ENCODE measurements at regions of chr1 and their contacts with region 1.

Region 1: DNA sequence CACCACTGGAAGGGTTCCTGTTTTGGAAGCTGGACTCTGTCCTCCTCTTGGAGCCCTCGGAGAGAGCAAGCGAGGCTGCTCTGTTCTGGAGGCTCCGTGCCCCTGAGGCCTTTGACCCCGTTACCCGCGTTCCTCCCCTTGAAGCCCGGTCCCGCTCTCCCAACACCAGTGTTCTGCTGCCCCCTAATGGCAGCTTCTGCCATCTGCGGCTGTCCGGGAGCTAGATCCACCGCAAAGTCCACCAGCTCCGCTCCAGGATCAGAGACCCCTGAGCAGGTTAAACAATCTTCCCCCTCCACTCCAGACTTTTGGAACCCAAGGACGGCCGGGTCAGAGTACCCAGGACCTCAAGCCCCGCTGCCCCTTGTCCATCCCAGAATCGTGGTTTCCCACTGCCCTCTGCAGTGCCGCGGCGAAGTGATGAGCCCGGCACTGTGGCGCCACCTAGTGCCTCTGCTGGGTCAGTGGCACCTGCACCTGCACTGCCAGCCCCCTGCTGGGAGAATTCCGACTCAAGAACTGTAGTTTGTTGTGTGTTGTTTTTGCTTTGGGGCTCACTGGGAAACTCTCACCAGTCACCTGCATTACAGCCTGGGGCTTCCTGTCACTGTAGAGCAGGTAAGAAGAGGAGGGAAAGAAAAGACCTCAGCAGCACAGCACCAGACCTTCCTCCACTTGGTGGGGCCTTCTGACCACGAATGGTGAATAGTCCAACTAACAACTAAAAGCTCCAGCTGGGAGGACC is 63.5 kb upstream of the NFASC start:
- DNase-seq: peak; percentile 89
- H3K4me3 ChIP-seq: peak overlapping the region; percentile 50 to 81
- H3K27ac ChIP-seq: no peak overlapping the region; a peak in 1 of 4 replicates
- H3K4me1 ChIP-seq: peaks cover 0 to 2% of the 10 kb centered on the region in 2 experiments; a peak in 1 of 4 replicates
- H3K27me3 ChIP-seq: 0 out of 2 replicates have a peak, but pooled peaks cover 2% of the 10 kb centered on the region
- CTCF ChIP-seq: peak; percentile 100
- EP300 ChIP-seq: no peak
- RAD21 ChIP-seq: peak; percentile 72

Region 2: DNA sequence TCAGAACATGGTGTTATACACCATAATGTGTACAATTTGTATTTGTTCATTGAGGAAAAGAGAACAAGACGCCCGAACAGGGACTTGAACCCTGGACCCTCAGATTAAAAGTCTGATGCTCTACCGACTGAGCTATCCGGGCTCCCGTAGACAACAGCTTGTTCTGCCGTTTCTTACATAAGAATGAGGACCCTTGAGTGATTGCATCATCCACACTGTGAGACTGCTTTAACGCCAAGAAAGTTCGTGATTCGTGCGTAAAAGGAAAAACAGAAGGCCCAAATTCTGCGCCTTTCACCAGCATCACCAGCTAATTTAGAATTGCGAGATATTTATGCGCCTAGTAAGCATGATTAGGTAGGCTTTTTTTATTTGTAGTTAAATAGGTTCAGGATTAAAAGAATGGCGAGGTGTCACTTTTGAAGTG is 300.1 kb before region 1 on chr1:
- CTCF ChIA-PET with region 1: interaction called, 31 read pairs
- POLR2A ChIA-PET with region 1: no interaction called
- DNase-seq: peak; percentile 43
- H3K4me3 ChIP-seq: peak overlapping the region; percentile 44 to 72
- H3K27ac ChIP-seq: peak overlapping the region; percentile 92 to 95
- H3K4me1 ChIP-seq: peaks cover 3 to 5% of the 10 kb centered on the region in 2 experiments; a peak in 2 of 4 replicates
- H3K27me3 ChIP-seq: no peaks in the 10 kb centered on the region
- CTCF ChIP-seq: no peak
- EP300 ChIP-seq: peak in 1 of 2 experiments; percentile 62; a peak in 1 of 4 replicates
- RAD21 ChIP-seq: no peak

Region 3: GRCh38 chr1:204565617-204566582 is 241.2 kb before region 1 on chr1:
- CTCF ChIA-PET with region 1: interaction called, 568 read pairs
- POLR2A ChIA-PET with region 1: interaction called, 6 read pairs
- DNase-seq: peak; percentile 89
- H3K4me3 ChIP-seq: no peak overlapping the region; a peak in 1 of 4 replicates
- H3K27ac ChIP-seq: no peak overlapping the region
- H3K4me1 ChIP-seq: no peaks in the 10 kb centered on the region; a peak in 1 of 4 replicates
- H3K27me3 ChIP-seq: no peaks in the 10 kb centered on the region
- CTCF ChIP-seq: peak; percentile 82
- EP300 ChIP-seq: no peak
- RAD21 ChIP-seq: peak; percentile 94

Region 4: DNA sequence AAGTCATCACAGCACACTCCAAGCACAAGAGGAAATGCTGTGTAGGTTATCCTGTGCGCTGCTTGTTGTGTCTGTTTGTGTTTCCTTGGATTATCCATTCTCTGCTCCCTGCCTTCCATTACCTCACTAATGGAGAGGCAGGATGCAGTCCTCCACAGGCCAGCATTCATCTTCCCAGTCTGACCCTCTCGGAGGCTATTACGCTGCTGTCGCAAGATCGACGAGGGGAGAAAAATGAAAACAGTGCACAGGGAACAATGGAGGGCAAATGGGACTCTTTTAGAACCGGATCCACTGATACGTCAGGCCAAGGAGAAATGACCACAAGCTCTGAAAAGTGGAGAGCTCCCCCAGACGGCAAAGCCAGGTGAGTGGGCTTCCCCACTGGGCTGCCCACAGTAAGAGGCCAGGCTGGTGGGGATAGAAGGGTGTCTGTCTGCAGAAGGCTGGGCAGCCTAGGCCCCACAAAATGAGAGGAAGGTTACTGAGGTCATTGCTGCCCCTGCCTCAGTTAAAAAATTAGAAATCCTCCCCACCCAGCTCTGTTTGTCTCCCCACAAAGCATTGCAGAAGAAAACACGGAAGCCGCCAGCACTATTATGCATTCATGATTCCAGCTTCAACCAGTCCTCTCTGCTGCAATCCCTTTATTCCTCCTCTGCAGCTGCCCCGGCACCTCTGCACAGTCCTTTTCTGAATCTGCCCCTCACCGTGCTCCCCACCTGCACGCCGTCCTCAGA is 143.3 kb before region 1 on chr1:
- CTCF ChIA-PET with region 1: interaction called, 12 read pairs
- POLR2A ChIA-PET with region 1: no interaction called
- DNase-seq: no peak
- H3K4me3 ChIP-seq: no peak overlapping the region
- H3K27ac ChIP-seq: no peak overlapping the region
- H3K4me1 ChIP-seq: peaks cover 0 to 5% of the 10 kb centered on the region in 2 experiments; a peak in 1 of 4 replicates
- H3K27me3 ChIP-seq: peaks cover 8% of the 10 kb centered on the region; the same call in 1 of the 2 replicates
- CTCF ChIP-seq: no peak
- EP300 ChIP-seq: no peak
- RAD21 ChIP-seq: no peak

Region 5: GRCh38 chr1:204769997-204770396 is 37.1 kb before region 1 on chr1:
- CTCF ChIA-PET with region 1: interaction called, 28 read pairs
- POLR2A ChIA-PET with region 1: no interaction called
- DNase-seq: no peak
- H3K4me3 ChIP-seq: no peak overlapping the region
- H3K27ac ChIP-seq: no peak overlapping the region
- H3K4me1 ChIP-seq: no peaks in the 10 kb centered on the region
- H3K27me3 ChIP-seq: peaks cover 23% of the 10 kb centered on the region; the same call in 1 of the 2 replicates
- CTCF ChIP-seq: no peak
- EP300 ChIP-seq: no peak
- RAD21 ChIP-seq: no peak

Region 6: GRCh38 chr1:204885288-204885711 is 78.2 kb after region 1 on chr1:
- CTCF ChIA-PET with region 1: interaction called, 46 read pairs
- POLR2A ChIA-PET with region 1: no interaction called
- DNase-seq: no peak
- H3K4me3 ChIP-seq: no peak overlapping the region
- H3K27ac ChIP-seq: no peak overlapping the region
- H3K4me1 ChIP-seq: peaks cover 0 to 16% of the 10 kb centered on the region in 2 experiments; a peak in 3 of 4 replicates
- H3K27me3 ChIP-seq: no peaks in the 10 kb centered on the region
- CTCF ChIP-seq: no peak
- EP300 ChIP-seq: no peak
- RAD21 ChIP-seq: no peak

Region 7: GRCh38 chr1:204968951-204969350 is 161.8 kb after region 1 on chr1:
- CTCF ChIA-PET with region 1: interaction called, 59 read pairs
- POLR2A ChIA-PET with region 1: no interaction called
- DNase-seq: no peak
- H3K4me3 ChIP-seq: no peak overlapping the region
- H3K27ac ChIP-seq: no peak overlapping the region
- H3K4me1 ChIP-seq: peaks cover 0 to 11% of the 10 kb centered on the region in 2 experiments; a peak in 2 of 4 replicates
- H3K27me3 ChIP-seq: no peaks in the 10 kb centered on the region
- CTCF ChIP-seq: no peak
- EP300 ChIP-seq: no peak
- RAD21 ChIP-seq: no peak

Region 8: DNA sequence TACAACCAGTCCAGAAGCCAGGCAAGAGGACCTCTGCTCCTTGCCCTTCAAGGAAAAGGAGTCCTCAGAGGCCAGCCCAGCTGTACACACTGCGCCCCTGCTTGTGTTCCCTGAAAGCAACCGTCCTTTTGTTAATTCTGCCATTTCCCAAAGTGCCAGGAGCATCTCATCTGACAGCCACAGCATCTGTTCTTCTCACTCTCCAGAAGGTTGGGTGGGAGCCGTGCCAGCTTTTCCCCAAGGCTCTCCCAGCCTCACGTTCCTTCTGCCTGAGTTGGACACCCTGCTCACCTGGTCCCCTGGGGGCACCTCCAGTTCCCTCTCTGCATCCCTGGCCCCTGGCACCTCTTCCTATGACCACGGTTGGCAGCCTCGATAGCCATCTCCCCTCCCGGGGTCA is 225.4 kb after region 1 on chr1:
- CTCF ChIA-PET with region 1: no interaction called
- POLR2A ChIA-PET with region 1: no interaction called
- DNase-seq: no peak
- H3K4me3 ChIP-seq: no peak overlapping the region
- H3K27ac ChIP-seq: no peak overlapping the region
- H3K4me1 ChIP-seq: peaks cover 0 to 8% of the 10 kb centered on the region in 2 experiments; a peak in 1 of 4 replicates
- H3K27me3 ChIP-seq: peaks cover 22% of the 10 kb centered on the region
- CTCF ChIP-seq: no peak
- EP300 ChIP-seq: no peak
- RAD21 ChIP-seq: no peak

Region 9: GRCh38 chr1:205226868-205227583 is 419.9 kb after region 1 on chr1:
- CTCF ChIA-PET with region 1: no interaction called
- POLR2A ChIA-PET with region 1: no interaction called
- DNase-seq: peak; percentile 39
- H3K4me3 ChIP-seq: peak overlapping the region; percentile 70 to 78
- H3K27ac ChIP-seq: peak overlapping the region in 1 of 2 experiments; percentile 56; a peak in 1 of 4 replicates
- H3K4me1 ChIP-seq: peaks cover 4 to 21% of the 10 kb centered on the region in 2 experiments; a peak in 2 of 4 replicates
- H3K27me3 ChIP-seq: no peaks in the 10 kb centered on the region
- CTCF ChIP-seq: no peak
- EP300 ChIP-seq: no peak
- RAD21 ChIP-seq: no peak